ENCODE measurements at regions of chr13 and their contacts with region 1.

Region 1: GRCh38 chr13:43786773-43787517 is at the start of gene ENOX1:
- DNase-seq: peak; percentile 92
- H3K4me3 ChIP-seq: peak within 1 kb of the TSS; percentile 68 to 89 (median 76)
- H3K27ac ChIP-seq: peak within 1 kb of the TSS; percentile 86 to 96 (median 91)
- H3K4me1 ChIP-seq: peaks cover 28 to 60% (median 56%) of the 10 kb centered on the region in 4 donors
- H3K27me3 ChIP-seq: peaks cover 0 to 4% (median 0%) of the 10 kb centered on the region in 4 donors
- CTCF ChIP-seq: peak in 2 of 3 experiments; percentile 26 to 35
- EP300 ChIP-seq: no peak
- POLR2A ChIP-seq: no peak
- total RNA-seq, gene ENOX1: 9.3 to 14.1 (median 12.4) TPM

Region 2: GRCh38 chr13:43269037-43269481 is 517.9 kb before region 1 on chr13:
- intact Hi-C with region 1: loop called (anchors 10 kb)
- DNase-seq: peak; percentile 93
- H3K4me3 ChIP-seq: no peak overlapping the region
- H3K27ac ChIP-seq: peak overlapping the region; percentile 66 to 79 (median 75)
- H3K4me1 ChIP-seq: peaks cover 23 to 32% (median 29%) of the 10 kb centered on the region in 4 donors
- H3K27me3 ChIP-seq: no peaks in the 10 kb centered on the region
- CTCF ChIP-seq: no peak
- EP300 ChIP-seq: peak; percentile 98
- POLR2A ChIP-seq: no peak

Region 3: GRCh38 chr13:43303033-43303729 is 483.8 kb before region 1 on chr13:
- intact Hi-C with region 1: loop called (anchors 5 kb)
- DNase-seq: no peak
- H3K4me3 ChIP-seq: no peak overlapping the region
- H3K27ac ChIP-seq: peak overlapping the region; percentile 46 to 67 (median 64)
- H3K4me1 ChIP-seq: peaks cover 16 to 57% (median 37%) of the 10 kb centered on the region in 4 donors
- H3K27me3 ChIP-seq: no peaks in the 10 kb centered on the region
- CTCF ChIP-seq: peak; percentile 34 to 65 (median 62)
- EP300 ChIP-seq: no peak
- POLR2A ChIP-seq: no peak

Region 4: DNA sequence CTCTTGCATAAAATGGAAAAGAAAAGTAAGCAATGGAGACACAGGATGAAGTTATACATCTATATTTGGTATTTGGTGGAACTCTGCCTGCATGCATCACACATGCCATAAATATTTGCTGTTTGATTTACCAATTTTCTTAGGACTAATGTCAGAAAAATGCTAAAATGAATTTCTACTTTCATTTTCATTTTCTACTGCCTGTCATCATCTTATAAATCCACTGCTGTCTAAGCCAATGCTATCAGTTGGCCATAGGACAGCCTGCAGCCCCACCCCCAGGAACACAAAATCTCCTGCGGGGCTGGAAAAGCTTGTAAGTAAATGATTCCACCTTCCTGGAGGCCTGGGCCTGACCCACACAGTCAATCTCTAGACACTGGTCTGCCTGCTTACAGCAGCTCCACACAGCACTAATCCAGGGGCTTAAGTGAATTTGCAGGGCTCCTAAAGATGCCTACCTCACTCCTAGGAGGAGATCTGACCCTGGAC is 122.2 kb before region 1 on chr13:
- intact Hi-C with region 1: loop called (anchors 5 kb)
- DNase-seq: no peak
- H3K4me3 ChIP-seq: peak overlapping the region in 1 of 4 donors; percentile 17
- H3K27ac ChIP-seq: peak overlapping the region; percentile 59 to 71 (median 64)
- H3K4me1 ChIP-seq: peaks cover 15 to 36% (median 32%) of the 10 kb centered on the region in 4 donors
- H3K27me3 ChIP-seq: no peaks in the 10 kb centered on the region
- CTCF ChIP-seq: no peak
- EP300 ChIP-seq: no peak
- POLR2A ChIP-seq: no peak

Region 5: DNA sequence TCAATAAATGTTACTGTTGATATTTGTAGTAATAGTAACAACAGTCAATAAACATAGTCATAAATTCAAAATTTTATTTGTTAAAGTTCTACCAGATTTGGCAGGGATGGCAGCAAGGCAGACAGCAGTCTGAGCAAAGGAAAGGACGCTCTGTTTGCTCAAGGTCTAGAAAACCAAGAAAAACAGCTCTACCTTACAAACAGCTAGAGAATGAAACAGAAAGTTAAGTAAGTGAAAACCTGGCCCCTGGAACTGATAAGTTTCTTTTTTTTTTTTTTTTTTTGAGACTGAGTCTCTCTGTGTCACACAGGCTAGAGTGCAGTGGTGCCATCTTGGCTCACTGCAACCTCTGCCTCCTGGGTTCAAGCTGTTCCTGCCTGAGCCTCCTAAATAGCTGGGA is 28.1 kb before region 1 on chr13:
- intact Hi-C with region 1: no loop called
- DNase-seq: no peak
- H3K4me3 ChIP-seq: no peak overlapping the region
- H3K27ac ChIP-seq: no peak overlapping the region
- H3K4me1 ChIP-seq: peaks cover 0 to 52% (median 39%) of the 10 kb centered on the region in 4 donors
- H3K27me3 ChIP-seq: no peaks in the 10 kb centered on the region
- CTCF ChIP-seq: no peak
- EP300 ChIP-seq: no peak
- POLR2A ChIP-seq: no peak

Measured in esophagus muscularis mucosa (tissue), 4 donors.